B cell (primary cell): ENCODE measurements at regions of chr9 and their contacts with region 1.

Region 1: DNA sequence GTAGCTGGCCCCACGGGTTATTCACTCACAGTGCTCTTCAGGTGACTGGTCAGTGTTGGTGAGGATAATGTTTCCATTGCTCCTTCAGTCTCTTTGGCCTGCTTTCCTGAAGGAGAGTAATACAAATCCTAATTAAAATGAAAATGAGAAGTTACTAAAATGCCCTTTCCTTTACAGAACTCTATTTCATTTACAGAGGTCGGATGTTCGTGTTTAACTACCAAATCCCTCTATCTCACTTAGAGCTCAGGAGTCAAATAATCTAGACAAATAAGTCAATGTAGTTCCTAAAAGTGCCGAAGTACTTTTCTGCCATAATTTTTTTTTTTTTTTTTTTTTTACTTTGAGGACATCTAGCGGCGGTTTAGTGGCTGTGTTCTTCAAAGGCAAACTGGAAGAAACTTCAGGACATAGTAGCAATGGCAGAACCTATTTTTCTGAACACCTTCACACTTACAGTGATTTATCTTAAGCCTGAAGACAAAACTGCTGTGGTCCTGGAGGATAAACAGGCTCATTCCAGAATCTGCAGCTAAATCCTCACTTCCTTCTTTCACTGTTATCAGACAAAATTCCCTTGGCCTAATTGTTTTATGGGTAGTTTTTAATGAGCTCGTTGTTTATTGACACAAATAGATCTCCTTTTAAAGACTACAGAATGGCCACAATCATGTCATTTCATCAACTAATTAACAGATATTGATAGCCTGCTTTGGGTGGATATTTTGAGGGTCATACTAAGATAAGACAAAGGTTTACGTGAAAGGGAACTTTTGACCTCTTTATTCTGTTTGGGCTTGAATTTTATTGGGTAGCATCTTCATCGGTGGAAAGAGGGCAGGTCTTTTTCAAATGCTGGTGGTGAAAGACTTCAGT is 207.6 kb upstream of the DMRTA1 start:
- DNase-seq: peak; percentile 58
- ATAC-seq: no peak
- H3K4me3 ChIP-seq: no peak overlapping the region
- H3K4me3 Mint-ChIP-seq: no peak overlapping the region
- H3K27ac ChIP-seq: no peak overlapping the region
- H3K27ac Mint-ChIP-seq: peak overlapping the region; percentile 27
- H3K4me1 ChIP-seq: peaks cover 32 to 38% of the 10 kb centered on the region in 2 donors
- H3K4me1 Mint-ChIP-seq: peaks cover 56% of the 10 kb centered on the region
- H3K27me3 ChIP-seq: no peaks in the 10 kb centered on the region
- H3K27me3 Mint-ChIP-seq: no peaks in the 10 kb centered on the region
- CTCF ChIP-seq: peak; percentile 58

Region 2: DNA sequence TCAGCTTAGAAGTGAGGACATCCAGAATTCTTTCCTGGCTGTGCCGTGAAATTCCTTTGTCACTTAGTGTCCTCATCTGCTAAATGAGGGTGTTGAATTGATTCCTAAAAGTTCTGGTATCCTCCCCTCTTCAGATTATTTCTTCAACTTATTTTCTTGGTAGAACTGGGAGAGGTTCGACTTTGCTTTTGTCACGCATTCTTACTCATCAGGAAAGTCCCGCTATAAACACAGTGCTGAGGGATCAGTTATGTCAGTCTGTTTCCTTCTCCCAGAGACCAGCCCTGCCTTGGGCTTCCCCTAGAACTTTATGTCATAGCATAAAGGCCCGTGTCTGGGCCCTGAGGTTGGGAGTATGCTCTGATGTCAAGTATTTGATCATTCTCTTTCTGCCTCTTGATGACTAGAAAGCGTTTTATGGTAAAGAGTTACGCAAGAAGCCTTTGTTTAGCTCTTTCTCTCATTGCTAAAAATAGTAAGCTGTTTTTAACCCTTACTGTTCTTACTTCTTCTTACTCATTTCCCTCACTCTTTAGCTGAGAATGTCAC is 407.0 kb before region 1 on chr9:
- CTCF ChIA-PET with region 1: interaction called, 8 read pairs
- POLR2A ChIA-PET with region 1: no interaction called
- intact Hi-C with region 1: loop called (anchors 1 kb)
- DNase-seq: peak; percentile 51
- ATAC-seq: peak; percentile 19
- H3K4me3 ChIP-seq: no peak overlapping the region
- H3K4me3 Mint-ChIP-seq: peak overlapping the region; percentile 33
- H3K27ac ChIP-seq: peak overlapping the region in 1 of 2 donors; percentile 75
- H3K27ac Mint-ChIP-seq: peak overlapping the region; percentile 78
- H3K4me1 ChIP-seq: peaks cover 28 to 29% of the 10 kb centered on the region in 2 donors
- H3K4me1 Mint-ChIP-seq: peaks cover 44% of the 10 kb centered on the region
- H3K27me3 ChIP-seq: no peaks in the 10 kb centered on the region
- H3K27me3 Mint-ChIP-seq: no peaks in the 10 kb centered on the region
- CTCF ChIP-seq: no peak

Region 3: GRCh38 chr9:22052376-22052945 is 186.6 kb before region 1 on chr9:
- CTCF ChIA-PET with region 1: interaction called, 5 read pairs
- POLR2A ChIA-PET with region 1: no interaction called
- intact Hi-C with region 1: loop called (anchors 2 kb)
- DNase-seq: no peak
- ATAC-seq: no peak
- H3K4me3 ChIP-seq: no peak overlapping the region
- H3K4me3 Mint-ChIP-seq: no peak overlapping the region
- H3K27ac ChIP-seq: no peak overlapping the region
- H3K27ac Mint-ChIP-seq: no peak overlapping the region
- H3K4me1 ChIP-seq: peaks cover 17 to 23% of the 10 kb centered on the region in 2 donors
- H3K4me1 Mint-ChIP-seq: peaks cover 28% of the 10 kb centered on the region
- H3K27me3 ChIP-seq: no peaks in the 10 kb centered on the region
- H3K27me3 Mint-ChIP-seq: no peaks in the 10 kb centered on the region
- CTCF ChIP-seq: no peak

Region 4: DNA sequence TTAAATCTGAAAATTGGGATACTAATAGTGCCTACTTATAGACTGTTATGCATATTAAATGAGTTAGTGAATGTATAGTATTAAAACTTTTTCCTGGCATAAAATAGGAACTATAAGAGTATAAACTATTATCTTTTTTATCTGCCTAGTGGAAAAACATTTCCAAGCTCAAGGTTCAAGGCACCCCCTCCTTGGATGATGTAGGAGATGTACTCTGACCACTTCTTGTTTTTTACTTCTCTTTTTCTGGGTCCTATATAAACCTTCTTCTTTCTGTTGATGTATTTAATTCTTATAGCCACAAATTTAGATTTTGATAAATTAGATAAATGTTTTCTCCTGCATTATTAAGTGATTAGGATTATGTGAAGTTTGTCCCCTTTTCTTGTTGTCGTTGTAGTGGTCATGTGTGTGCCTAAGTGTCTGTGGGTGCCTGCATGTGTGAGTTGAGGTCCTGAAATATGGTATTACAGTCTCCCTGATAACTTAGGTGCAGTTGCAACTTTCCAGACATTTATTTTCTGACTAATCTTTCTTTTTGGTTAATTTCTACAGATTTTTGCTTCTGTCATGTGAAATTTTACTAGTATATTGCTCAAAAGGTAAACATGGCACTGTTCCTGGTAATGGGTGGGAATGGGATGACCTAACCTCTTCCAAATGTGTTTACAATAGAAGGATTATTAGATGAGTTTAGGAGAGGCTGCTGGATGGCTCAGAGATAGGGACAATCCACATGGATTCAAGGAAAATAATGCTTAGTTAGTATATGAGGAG is 69.1 kb before region 1 on chr9:
- CTCF ChIA-PET with region 1: no interaction called
- POLR2A ChIA-PET with region 1: no interaction called
- intact Hi-C with region 1: loop called (anchors 2 kb)
- DNase-seq: peak; percentile 40
- ATAC-seq: peak; percentile 39
- H3K4me3 ChIP-seq: peak overlapping the region in 1 of 5 experiments; percentile 5
- H3K4me3 Mint-ChIP-seq: peak overlapping the region; percentile 58
- H3K27ac ChIP-seq: peak overlapping the region; percentile 79 to 83
- H3K27ac Mint-ChIP-seq: peak overlapping the region; percentile 56
- H3K4me1 ChIP-seq: peaks cover 36 to 52% of the 10 kb centered on the region in 2 donors
- H3K4me1 Mint-ChIP-seq: peaks cover 56% of the 10 kb centered on the region
- H3K27me3 ChIP-seq: no peaks in the 10 kb centered on the region
- H3K27me3 Mint-ChIP-seq: no peaks in the 10 kb centered on the region
- CTCF ChIP-seq: no peak

Region 5: DNA sequence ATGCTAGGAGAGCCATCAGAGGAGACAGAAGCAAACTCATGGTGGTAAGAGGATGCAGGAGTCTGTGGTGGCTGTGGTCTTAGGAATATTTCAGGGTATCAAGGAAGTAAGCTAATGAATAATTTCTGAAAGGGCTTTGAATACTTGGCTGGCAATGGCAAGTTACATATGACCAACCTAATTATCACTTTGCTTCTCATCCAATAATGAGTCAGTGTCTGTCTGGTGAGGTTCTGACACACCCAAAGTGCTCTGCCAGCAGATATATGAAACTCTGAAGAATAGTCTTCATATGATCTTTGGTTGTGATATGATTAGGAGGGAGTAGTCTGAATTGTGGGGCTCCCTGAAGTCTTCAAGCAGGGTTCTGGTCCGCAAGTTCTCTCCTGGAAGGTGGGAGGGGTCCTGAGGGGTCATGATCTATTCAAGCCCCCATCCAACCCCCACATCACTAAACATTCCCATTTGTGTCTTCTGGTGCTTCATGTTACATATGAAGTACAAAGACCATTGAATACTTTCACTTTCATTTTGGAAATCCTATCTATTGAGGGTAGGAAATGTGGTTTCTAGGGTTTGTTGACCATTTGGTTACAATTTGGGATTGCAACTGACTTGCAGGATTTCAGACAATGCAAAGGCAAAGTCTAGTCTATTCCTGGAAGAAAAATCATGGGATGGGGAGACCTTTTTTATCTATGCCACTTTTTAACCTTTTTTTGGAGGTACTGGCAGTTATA is 30.0 kb before region 1 on chr9:
- CTCF ChIA-PET with region 1: interaction called, 11 read pairs
- POLR2A ChIA-PET with region 1: no interaction called
- intact Hi-C with region 1: loop called (anchors 1 kb)
- DNase-seq: no peak
- ATAC-seq: no peak
- H3K4me3 ChIP-seq: peak overlapping the region in 1 of 5 experiments; percentile 42
- H3K4me3 Mint-ChIP-seq: peak overlapping the region; percentile 72
- H3K27ac ChIP-seq: no peak overlapping the region
- H3K27ac Mint-ChIP-seq: peak overlapping the region; percentile 23
- H3K4me1 ChIP-seq: peaks cover 36 to 46% of the 10 kb centered on the region in 2 donors
- H3K4me1 Mint-ChIP-seq: peaks cover 42% of the 10 kb centered on the region
- H3K27me3 ChIP-seq: no peaks in the 10 kb centered on the region
- H3K27me3 Mint-ChIP-seq: no peaks in the 10 kb centered on the region
- CTCF ChIP-seq: no peak